Activated naive CD4-positive, alpha-beta T cell treated with anti-CD3 and anti-CD28 coated beads for 36 hours (primary cell): ENCODE measurements at regions of chr2 and their contacts with region 1.

Region 1: DNA sequence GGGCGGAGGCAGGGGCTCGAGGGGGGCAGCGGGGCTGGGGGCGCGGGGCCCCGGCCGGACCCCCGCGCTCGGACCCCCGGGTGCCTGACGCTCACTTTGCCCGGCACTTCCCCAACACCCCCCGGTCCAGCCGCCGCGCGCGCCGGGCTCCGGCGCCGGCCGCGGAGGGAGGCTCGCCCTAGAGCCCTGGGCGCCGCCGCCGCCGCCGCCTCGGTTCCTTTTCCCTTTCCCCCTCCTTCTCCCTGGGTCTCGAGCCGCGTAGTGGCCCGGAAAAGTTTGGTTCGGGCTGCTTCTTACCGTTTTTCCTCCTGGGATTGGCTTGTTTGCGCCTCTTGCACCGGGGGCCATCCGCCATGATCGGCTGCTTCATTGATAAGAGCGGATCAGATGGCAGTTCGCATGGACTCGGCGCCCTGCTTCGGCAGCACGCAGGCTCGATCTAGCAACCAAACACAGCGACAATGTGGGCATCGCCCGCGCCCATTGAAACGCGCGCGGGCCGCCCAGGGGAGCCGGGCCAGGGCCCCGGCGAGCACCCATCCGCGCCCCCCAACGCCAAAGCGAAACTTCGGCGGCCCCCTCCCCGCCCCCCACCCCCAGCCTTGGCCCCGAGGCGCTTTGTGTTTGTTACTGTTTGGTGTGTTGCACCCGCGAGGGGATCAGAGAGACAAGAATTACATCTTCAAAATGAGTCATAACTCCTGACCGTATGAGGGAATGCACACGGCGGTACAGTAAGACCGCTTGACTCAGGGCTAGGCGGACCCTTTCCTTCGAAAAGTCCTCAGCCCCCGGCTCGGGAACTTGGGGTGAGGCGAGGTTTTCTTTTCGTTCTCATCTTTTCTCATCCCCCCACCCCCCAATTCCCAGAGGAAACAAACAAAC is 2.7 kb downstream of the ZEB2 start:
- DNase-seq: peak; percentile 63
- H3K4me3 Mint-ChIP-seq: no peak overlapping the region
- H3K27ac Mint-ChIP-seq: peak overlapping the region; percentile 88
- H3K4me1 Mint-ChIP-seq: peaks cover 15% of the 10 kb centered on the region
- H3K27me3 Mint-ChIP-seq: peaks cover 50% of the 10 kb centered on the region

Region 2: DNA sequence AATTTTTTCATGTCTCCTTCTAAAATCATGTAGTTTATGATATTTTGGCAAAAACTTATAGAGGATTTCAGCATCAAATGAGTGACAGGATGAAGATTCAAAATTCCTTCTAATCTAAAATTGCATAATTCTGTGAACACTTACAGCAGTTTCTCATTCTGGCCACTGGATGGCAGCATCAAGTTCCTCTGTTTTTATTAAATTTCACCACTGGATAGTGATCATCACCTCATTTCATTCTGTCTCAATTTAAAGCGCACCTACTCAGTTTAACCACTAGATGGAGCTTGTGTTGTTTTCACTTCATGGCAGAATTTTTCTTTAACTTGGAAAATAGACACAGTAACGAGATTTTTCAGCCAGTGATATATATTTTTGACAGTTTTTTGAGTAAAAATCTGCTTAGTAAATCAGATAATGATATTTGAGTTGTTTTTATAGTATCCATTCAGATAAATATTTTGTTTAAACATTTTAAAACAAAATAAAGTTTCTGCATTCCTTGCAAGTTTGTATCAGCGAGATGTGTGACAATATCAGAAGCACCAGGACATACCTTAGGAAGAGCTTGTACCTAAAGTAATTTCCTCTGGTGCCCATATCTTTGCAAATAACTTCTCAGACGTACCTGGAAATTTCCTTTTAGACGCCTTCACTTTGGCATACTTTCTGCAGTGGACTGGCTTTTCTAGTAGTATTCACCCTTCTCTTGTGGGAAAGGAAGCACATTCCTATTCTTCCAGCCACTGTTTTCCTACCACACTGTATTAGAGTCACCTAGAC is 1482.7 kb before region 1 on chr2:
- CTCF ChIA-PET with region 1: no interaction called
- intact Hi-C with region 1: loop called (anchors 5 kb)
- DNase-seq: peak; percentile 78
- H3K4me3 Mint-ChIP-seq: no peak overlapping the region
- H3K27ac Mint-ChIP-seq: no peak overlapping the region
- H3K4me1 Mint-ChIP-seq: peaks cover 14% of the 10 kb centered on the region
- H3K27me3 Mint-ChIP-seq: peaks cover 7% of the 10 kb centered on the region

Region 3: GRCh38 chr2:143730155-143730952 is 786.9 kb before region 1 on chr2:
- CTCF ChIA-PET with region 1: no interaction called
- intact Hi-C with region 1: loop called (anchors 5 kb)
- DNase-seq: peak; percentile 44
- H3K4me3 Mint-ChIP-seq: no peak overlapping the region
- H3K27ac Mint-ChIP-seq: peak overlapping the region; percentile 61
- H3K4me1 Mint-ChIP-seq: peaks cover 32% of the 10 kb centered on the region
- H3K27me3 Mint-ChIP-seq: no peaks in the 10 kb centered on the region

Region 4: GRCh38 chr2:144162652-144163051 is 354.6 kb before region 1 on chr2:
- CTCF ChIA-PET with region 1: no interaction called
- intact Hi-C with region 1: loop called (anchors 2 kb)
- DNase-seq: peak; percentile 66
- H3K4me3 Mint-ChIP-seq: no peak overlapping the region
- H3K27ac Mint-ChIP-seq: no peak overlapping the region
- H3K4me1 Mint-ChIP-seq: peaks cover 5% of the 10 kb centered on the region
- H3K27me3 Mint-ChIP-seq: no peaks in the 10 kb centered on the region

Region 5: DNA sequence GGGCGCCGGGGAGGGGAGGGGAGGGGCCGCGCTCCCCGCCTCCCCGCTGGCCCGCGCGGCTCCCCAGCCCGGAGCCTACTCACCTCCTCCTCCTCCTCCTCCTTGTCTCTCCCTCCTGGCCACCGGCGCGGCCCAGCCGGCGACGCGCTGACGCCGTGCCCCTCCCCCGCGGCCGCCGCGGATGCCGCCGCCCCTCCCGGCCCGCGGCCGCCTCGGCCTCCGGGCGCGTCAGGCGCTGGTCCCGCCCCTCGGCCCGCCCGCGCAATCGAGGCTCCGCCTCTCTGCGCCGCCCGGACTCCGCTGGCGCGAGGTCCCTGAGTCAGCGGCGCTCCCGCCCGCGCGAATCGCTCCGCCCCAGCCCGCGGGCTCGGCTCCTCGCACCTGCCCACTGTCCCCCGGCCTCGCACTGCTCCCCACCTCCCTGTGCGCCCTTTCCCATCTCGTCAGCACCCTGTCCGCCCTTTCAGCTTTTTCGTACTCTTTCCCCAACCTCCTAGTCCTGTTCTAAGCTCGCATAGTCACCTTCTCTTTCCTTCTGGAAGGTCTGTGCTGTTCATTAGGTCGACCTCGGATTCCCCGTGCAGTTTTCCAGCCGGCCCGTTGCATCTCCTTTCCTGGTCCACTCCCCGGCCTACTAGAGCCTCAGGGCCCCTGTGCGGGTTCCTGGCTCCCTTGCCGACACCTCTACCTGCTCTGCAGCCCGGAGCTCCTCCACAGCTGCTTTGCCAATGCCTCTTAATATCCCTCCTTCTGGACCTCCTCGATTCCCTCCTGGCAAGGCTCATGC is 184.7 kb before region 1 on chr2:
- CTCF ChIA-PET with region 1: no interaction called
- intact Hi-C with region 1: loop called (anchors 1 kb)
- DNase-seq: peak; percentile 83
- H3K4me3 Mint-ChIP-seq: peak overlapping the region; percentile 79
- H3K27ac Mint-ChIP-seq: peak overlapping the region; percentile 78
- H3K4me1 Mint-ChIP-seq: peaks cover 19% of the 10 kb centered on the region
- H3K27me3 Mint-ChIP-seq: no peaks in the 10 kb centered on the region

Region 6: DNA sequence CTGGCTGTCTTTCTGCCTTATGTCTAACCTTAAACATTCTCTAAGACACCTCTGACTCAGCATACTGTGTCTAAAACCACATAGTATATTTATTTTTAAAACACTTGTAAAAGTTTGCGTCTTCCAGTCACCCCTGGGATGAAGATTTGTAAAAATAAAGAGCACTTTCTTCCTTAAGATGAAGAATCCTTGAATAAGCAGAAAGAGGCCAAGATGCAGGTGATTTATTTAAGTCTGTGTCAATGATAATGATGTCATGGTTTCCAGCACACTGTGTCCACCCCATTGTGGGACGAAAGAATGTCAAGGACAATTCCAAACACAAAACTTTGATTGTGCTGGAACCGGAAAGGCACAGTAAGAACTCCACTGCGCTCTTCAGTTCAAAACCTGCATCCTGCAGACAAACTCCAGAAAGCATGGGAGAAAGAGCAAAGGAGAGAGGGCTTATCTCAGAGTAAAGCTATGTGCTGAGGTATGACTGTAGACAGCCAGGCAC is 90.2 kb before region 1 on chr2:
- CTCF ChIA-PET with region 1: no interaction called
- intact Hi-C with region 1: no loop called
- DNase-seq: no peak
- H3K4me3 Mint-ChIP-seq: no peak overlapping the region
- H3K27ac Mint-ChIP-seq: no peak overlapping the region
- H3K4me1 Mint-ChIP-seq: peaks cover 10% of the 10 kb centered on the region
- H3K27me3 Mint-ChIP-seq: peaks cover 15% of the 10 kb centered on the region

Region 7: GRCh38 chr2:144471305-144472045 is 45.7 kb before region 1 on chr2:
- CTCF ChIA-PET with region 1: no interaction called
- intact Hi-C with region 1: loop called (anchors 1 kb)
- DNase-seq: no peak
- H3K4me3 Mint-ChIP-seq: no peak overlapping the region
- H3K27ac Mint-ChIP-seq: no peak overlapping the region
- H3K4me1 Mint-ChIP-seq: peaks cover 9% of the 10 kb centered on the region
- H3K27me3 Mint-ChIP-seq: peaks cover 8% of the 10 kb centered on the region